ENCODE measurements at regions of chr6 and their contacts with region 1.

Region 1: GRCh38 chr6:56359201-56359899 is 112.0 kb upstream of the COL21A1 start:
- DNase-seq: no peak
- ATAC-seq: peak; percentile 85
- H3K4me3 Mint-ChIP-seq: no peak overlapping the region
- H3K27ac Mint-ChIP-seq: no peak overlapping the region
- H3K4me1 Mint-ChIP-seq: no peaks in the 10 kb centered on the region
- H3K27me3 Mint-ChIP-seq: no peaks in the 10 kb centered on the region
- CTCF ChIP-seq: peak; percentile 85

Region 2: DNA sequence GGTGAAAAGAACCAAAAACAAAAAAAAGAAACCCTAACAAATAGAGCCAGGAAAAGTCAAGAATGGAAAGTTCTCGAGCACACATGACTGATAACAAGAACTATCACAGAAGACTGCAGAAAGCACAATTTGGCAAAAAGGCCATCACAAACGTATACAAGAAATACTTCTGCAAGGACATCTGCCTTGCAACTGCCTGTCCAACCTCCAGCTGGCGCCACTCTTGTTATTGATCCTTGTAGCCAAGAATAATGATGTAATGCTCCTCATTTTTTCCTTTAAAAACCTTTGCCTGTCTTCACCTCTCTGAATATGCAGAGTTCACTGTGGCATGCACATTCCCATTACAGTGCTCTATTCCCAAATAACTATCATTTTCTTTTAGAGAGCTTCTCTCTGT is 396.0 kb before region 1 on chr6:
- CTCF ChIA-PET with region 1: no interaction called
- POLR2A ChIA-PET with region 1: no interaction called
- intact Hi-C with region 1: no loop called
- DNase-seq: no peak
- ATAC-seq: no peak
- H3K4me3 Mint-ChIP-seq: no peak overlapping the region
- H3K27ac Mint-ChIP-seq: no peak overlapping the region
- H3K4me1 Mint-ChIP-seq: no peaks in the 10 kb centered on the region
- H3K27me3 Mint-ChIP-seq: no peaks in the 10 kb centered on the region
- CTCF ChIP-seq: no peak

Region 3: GRCh38 chr6:56451165-56451739 is 91.9 kb after region 1 on chr6:
- CTCF ChIA-PET with region 1: no interaction called
- POLR2A ChIA-PET with region 1: no interaction called
- intact Hi-C with region 1: no loop called
- DNase-seq: no peak
- ATAC-seq: no peak
- H3K4me3 Mint-ChIP-seq: no peak overlapping the region
- H3K27ac Mint-ChIP-seq: no peak overlapping the region
- H3K4me1 Mint-ChIP-seq: no peaks in the 10 kb centered on the region
- H3K27me3 Mint-ChIP-seq: no peaks in the 10 kb centered on the region
- CTCF ChIP-seq: no peak

Region 4: GRCh38 chr6:56570413-56571359 is 211.3 kb after region 1 on chr6:
- CTCF ChIA-PET with region 1: interaction called, 15 read pairs
- POLR2A ChIA-PET with region 1: no interaction called
- intact Hi-C with region 1: loop called (anchors 1 kb)
- DNase-seq: no peak
- ATAC-seq: peak; percentile 37
- H3K4me3 Mint-ChIP-seq: no peak overlapping the region
- H3K27ac Mint-ChIP-seq: no peak overlapping the region
- H3K4me1 Mint-ChIP-seq: no peaks in the 10 kb centered on the region
- H3K27me3 Mint-ChIP-seq: no peaks in the 10 kb centered on the region
- CTCF ChIP-seq: peak; percentile 17

Region 5: GRCh38 chr6:56595490-56596122 is 236.3 kb after region 1 on chr6:
- CTCF ChIA-PET with region 1: interaction called, 6 read pairs
- POLR2A ChIA-PET with region 1: no interaction called
- intact Hi-C with region 1: loop called (anchors 1 kb)
- DNase-seq: no peak
- ATAC-seq: peak; percentile 51
- H3K4me3 Mint-ChIP-seq: no peak overlapping the region
- H3K27ac Mint-ChIP-seq: no peak overlapping the region
- H3K4me1 Mint-ChIP-seq: peaks cover 26% of the 10 kb centered on the region
- H3K27me3 Mint-ChIP-seq: no peaks in the 10 kb centered on the region
- CTCF ChIP-seq: no peak

Region 6: GRCh38 chr6:56699066-56699654 is 339.8 kb after region 1 on chr6:
- CTCF ChIA-PET with region 1: interaction called, 3 read pairs
- POLR2A ChIA-PET with region 1: no interaction called
- intact Hi-C with region 1: loop called (anchors 1 kb)
- DNase-seq: no peak
- ATAC-seq: no peak
- H3K4me3 Mint-ChIP-seq: no peak overlapping the region
- H3K27ac Mint-ChIP-seq: no peak overlapping the region
- H3K4me1 Mint-ChIP-seq: no peaks in the 10 kb centered on the region
- H3K27me3 Mint-ChIP-seq: no peaks in the 10 kb centered on the region
- CTCF ChIP-seq: no peak

Region 7: DNA sequence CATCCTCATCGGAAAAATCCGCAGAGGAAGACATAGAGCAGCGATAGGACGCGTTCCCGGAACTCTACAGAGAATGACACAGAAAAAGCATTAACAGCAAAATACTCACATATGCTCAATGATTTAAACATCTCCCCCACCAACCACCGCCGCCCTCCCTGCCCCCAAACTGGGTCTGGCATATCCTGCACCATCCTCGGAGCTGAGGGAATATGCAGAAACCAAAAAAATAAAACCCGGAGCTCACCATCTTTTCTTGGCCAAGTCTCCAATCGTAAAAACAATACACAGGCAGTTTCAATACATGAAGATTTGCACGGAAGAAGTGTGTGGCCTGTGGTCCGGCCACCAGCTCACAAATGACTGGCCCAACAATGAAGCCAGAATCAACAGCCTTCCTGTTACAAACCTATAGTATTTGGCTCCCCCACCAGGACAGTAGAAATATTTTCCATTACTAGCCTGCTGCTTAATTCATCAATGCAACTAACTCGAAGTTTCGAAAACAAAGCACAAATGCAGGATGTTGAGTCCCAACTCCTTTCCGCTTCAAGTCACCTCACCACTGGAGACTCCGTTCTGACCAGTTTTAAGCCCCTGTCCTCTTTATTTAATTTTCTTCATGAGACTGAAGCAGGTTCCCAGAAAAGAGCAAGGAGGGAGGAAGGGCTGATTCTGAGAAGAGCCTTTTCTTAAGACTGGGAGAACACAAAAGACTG is 492.4 kb after region 1 on chr6:
- CTCF ChIA-PET with region 1: no interaction called
- POLR2A ChIA-PET with region 1: no interaction called
- intact Hi-C with region 1: loop called (anchors 2 kb)
- DNase-seq: no peak
- ATAC-seq: peak; percentile 54
- H3K4me3 Mint-ChIP-seq: peak overlapping the region; percentile 64
- H3K27ac Mint-ChIP-seq: no peak overlapping the region
- H3K4me1 Mint-ChIP-seq: peaks cover 16% of the 10 kb centered on the region
- H3K27me3 Mint-ChIP-seq: peaks cover 41% of the 10 kb centered on the region
- CTCF ChIP-seq: no peak

Region 8: DNA sequence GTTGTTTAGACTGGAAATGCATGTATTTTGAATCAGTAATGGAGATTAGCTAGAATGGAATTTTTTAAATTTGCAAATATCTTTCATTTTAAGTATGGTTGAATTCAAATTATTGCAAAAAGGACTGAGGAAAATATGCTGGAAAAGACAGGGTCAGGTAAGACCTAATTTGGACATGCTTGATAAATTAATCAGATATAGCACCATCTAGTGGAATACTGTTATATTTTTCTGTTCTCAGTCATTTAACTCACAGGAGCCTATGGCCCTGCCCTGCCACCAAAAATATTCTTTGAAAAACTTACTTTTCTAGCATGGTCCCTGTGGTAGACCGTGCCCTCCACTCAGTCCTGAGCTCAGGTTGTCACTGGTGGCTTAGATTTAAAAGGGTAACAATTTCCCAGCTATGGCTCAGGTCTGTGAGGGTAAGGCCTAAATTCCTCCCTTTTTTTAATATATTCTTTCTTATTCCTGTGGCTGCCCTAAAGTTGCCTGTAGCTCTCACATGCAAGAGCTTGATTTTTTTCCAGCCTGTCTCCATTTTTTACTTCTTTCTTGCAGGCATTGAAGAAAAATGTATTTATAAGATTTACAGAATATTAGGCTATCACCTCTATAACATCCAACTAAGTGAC is 661.9 kb after region 1 on chr6:
- CTCF ChIA-PET with region 1: no interaction called
- POLR2A ChIA-PET with region 1: no interaction called
- intact Hi-C with region 1: loop called (anchors 2 kb)
- DNase-seq: no peak
- ATAC-seq: peak; percentile 40
- H3K4me3 Mint-ChIP-seq: no peak overlapping the region
- H3K27ac Mint-ChIP-seq: no peak overlapping the region
- H3K4me1 Mint-ChIP-seq: no peaks in the 10 kb centered on the region
- H3K27me3 Mint-ChIP-seq: peaks cover 3% of the 10 kb centered on the region
- CTCF ChIP-seq: no peak

Region 9: GRCh38 chr6:57324538-57324937 is 965.2 kb after region 1 on chr6:
- CTCF ChIA-PET with region 1: no interaction called
- POLR2A ChIA-PET with region 1: no interaction called
- intact Hi-C with region 1: loop called (anchors 1 kb)
- DNase-seq: no peak
- ATAC-seq: no peak
- H3K4me3 Mint-ChIP-seq: no peak overlapping the region
- H3K27ac Mint-ChIP-seq: no peak overlapping the region
- H3K4me1 Mint-ChIP-seq: peaks cover under 1% of the 10 kb centered on the region
- H3K27me3 Mint-ChIP-seq: no peaks in the 10 kb centered on the region
- CTCF ChIP-seq: no peak

Measured in activated B cell treated with CpG ODN at 0.5 μM for 24 hours (primary cell).